GM12878 (cell line): ENCODE measurements at regions of chr6 and their contacts with region 1.

Region 1: DNA sequence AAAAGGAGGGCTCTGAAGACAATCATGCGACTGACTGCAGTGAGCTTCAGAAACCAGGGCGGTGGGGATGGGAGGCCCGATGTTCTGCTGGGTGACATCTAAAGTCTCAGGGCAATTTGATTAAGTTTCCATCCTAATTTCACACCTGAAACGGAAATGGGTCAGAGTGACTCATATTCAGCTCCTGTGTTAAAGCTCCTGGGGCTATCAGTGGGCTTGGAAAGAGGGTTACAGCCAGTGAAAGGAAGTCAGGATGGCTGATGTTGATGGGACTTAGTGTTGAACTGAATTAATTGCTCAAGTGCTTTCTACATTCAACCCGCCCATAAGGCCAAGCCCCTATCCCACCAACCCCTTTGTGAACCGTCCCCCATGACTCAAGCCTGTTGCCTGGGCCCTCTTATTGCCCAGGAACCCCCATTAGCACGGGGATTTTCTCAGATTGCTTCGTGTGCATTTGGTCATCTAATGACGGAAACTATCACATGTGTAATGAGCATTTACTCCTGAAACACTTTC is 47.1 kb upstream of the TBC1D7 start:
- DNase-seq: peak; percentile 95
- ATAC-seq: peak; percentile 88
- H3K4me3 ChIP-seq: no peak overlapping the region
- H3K27ac ChIP-seq: peak overlapping the region; percentile 98
- H3K4me1 ChIP-seq: peaks cover 65% of the 10 kb centered on the region
- H3K27me3 ChIP-seq: no peaks in the 10 kb centered on the region
- CTCF ChIP-seq: no peak
- EP300 ChIP-seq: peak; percentile 72 to 82; a peak in 3 of 4 replicates
- POLR2A ChIP-seq: peak; percentile 38; the same call in 1 of the 2 replicates
- RAD21 ChIP-seq: no peak

Region 2: DNA sequence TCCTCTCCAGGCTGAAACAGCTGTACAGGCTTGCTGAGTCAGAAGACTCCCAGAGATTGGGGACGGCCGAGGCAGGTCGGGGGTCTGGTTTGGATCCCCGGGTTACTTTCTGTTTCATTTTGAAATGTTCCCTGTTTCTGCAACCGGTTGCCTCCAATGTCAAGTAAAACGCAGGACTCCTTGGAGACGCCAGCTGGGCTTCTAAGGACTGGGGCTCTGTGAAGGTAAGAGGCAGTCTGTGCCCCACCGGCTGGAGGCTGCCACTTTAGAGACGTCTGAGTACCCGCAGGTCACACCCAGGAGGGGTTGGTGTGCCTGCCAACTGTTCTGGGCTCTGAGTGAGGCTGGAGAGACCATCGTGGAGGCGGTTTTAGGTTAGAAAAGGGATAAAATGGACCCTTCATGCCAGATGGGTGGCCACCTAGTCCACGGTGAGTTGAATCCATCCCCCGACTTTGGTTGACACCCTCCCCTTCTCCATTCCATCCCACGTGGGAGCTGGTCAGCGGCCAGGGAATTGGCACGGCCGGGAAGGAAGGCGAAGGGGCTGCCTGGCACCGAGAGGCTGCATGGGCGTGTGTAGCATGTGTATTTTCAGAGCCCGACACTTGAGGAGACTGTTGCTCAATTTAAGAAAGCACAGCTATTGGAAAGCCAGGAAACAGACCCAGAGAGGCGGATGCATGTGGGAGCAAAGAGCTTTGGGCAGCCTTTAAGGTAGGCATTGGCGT is 417.9 kb before region 1 on chr6:
- CTCF ChIA-PET with region 1: no interaction called
- POLR2A ChIA-PET with region 1: no interaction called
- RAD21 ChIA-PET with region 1: no interaction called
- SMC1A ChIA-PET with region 1: no interaction called
- in situ Hi-C with region 1: no loop called
- intact Hi-C with region 1: no loop called
- DNase-seq: no peak
- ATAC-seq: peak; percentile 68
- H3K4me3 ChIP-seq: peak overlapping the region; percentile 68
- H3K27ac ChIP-seq: no peak overlapping the region
- H3K4me1 ChIP-seq: no peaks in the 10 kb centered on the region
- H3K27me3 ChIP-seq: peaks cover 2 to 23% of the 10 kb centered on the region in 2 experiments; a peak in 3 of 4 replicates
- CTCF ChIP-seq: peak in 1 of 3 experiments; percentile 8; a peak in 1 of 6 replicates
- EP300 ChIP-seq: no peak
- POLR2A ChIP-seq: no peak
- RAD21 ChIP-seq: 0 out of 2 replicates have a peak, but pooled peaks have one; percentile 13

Region 3: DNA sequence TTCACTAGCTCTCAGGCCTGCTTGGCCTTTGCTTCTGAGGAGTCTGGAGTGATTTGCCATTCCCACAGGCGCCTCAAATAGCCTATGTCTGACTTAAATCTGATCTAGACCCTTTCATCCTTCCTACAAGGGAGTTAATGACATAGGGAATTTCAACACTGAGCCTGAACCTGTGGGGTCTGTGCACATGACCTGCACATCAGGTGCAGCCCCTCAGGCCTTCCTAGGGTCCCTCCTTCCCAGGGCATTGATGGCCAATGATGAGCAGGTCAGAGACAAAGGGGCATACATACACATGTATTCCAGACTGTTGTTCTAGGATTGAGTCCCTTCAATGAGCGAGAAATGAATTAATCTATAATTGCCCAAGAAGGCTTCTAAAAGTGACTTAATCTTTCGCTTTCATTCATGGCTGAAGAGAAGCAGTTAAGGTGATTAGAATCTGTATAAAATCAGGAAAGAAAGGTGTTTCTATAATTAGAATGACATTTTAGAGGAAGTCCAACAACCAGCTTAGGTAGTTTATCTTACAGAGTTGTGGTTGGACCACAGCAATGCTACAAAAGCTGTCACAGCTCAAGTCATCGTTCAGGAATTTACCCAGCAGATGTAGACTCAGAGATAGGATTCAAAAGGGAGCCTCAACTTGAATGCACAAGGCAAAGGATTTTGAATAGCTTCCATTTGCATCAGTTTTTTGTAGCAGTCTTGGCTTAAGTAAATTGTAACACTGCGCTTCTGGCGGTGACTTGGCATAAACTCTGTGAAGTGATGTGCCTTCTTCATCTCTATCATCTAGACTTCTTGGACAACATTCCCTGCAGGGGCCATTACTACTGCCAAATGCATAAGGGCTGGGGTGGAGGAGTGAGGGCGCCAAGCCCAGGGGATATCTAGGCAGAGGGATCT is 20.1 kb before region 1 on chr6:
- CTCF ChIA-PET with region 1: interaction called, 41 read pairs
- POLR2A ChIA-PET with region 1: interaction called, 45 read pairs
- RAD21 ChIA-PET with region 1: interaction called, 67 read pairs
- SMC1A ChIA-PET with region 1: interaction called, 178 read pairs
- in situ Hi-C with region 1: no loop called
- intact Hi-C with region 1: loop called (anchors 1 kb)
- DNase-seq: peak; percentile 66
- ATAC-seq: peak; percentile 79
- H3K4me3 ChIP-seq: peak overlapping the region; percentile 58
- H3K27ac ChIP-seq: peak overlapping the region; percentile 94
- H3K4me1 ChIP-seq: peaks cover 36% of the 10 kb centered on the region
- H3K27me3 ChIP-seq: no peaks in the 10 kb centered on the region
- CTCF ChIP-seq: no peak
- EP300 ChIP-seq: 0 out of 4 replicates have a peak, but pooled peaks of 1 of the 2 experiments have one; percentile 25
- POLR2A ChIP-seq: no peak
- RAD21 ChIP-seq: no peak

Region 4: DNA sequence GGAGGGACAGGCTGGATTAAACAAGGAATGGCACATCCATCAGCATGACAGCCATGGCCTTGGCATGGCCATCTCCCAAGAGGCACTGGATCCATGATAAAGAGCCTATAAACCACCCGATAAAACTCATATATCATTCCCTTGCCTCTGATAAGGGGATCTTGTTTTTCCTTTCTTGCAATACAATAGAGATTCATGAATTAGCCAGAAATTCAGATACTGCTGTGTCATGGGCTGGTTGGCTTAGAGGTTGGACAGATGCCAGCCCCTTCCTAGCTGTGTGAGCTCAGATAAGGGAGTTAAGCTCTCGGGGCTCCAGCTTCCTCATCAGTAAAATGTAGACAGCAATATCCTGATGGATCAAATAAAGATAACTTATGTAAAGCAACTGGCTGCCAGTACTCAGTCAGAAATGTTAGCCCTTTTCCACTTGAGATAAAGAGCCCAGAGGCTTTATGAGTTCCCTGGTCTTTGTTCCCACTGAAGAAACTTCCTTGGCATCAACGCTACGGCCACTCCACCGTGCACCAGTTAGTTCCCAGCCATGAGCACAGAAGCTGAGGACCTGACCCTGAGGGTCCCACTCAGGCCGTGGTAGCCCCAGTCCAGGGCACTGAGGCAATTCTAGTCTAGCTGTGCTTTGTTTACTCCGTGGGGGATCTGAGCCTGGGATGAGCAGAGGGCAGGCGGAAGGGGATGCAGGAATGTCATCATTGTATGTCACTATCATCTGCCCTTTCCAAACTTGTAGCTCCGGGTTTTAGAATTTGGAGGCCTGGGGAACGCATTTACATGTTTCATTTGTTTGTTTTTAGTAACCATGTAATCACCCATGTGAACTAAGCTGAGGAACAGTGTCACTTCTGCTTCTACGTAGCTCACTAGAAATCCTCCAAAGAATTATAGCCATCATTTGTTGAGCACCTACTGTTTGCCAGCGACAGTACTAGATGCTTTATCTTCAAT is 20.1 kb after region 1 on chr6:
- CTCF ChIA-PET with region 1: interaction called, 15 read pairs
- POLR2A ChIA-PET with region 1: interaction called, 11 read pairs
- RAD21 ChIA-PET with region 1: interaction called, 14 read pairs
- SMC1A ChIA-PET with region 1: interaction called, 19 read pairs
- in situ Hi-C with region 1: no loop called
- intact Hi-C with region 1: no loop called
- DNase-seq: no peak
- ATAC-seq: peak; percentile 65
- H3K4me3 ChIP-seq: no peak overlapping the region; the same call in 1 of the 2 replicates
- H3K27ac ChIP-seq: peak overlapping the region; percentile 76
- H3K4me1 ChIP-seq: peaks cover 38% of the 10 kb centered on the region
- H3K27me3 ChIP-seq: no peaks in the 10 kb centered on the region
- CTCF ChIP-seq: no peak
- EP300 ChIP-seq: 0 out of 4 replicates have a peak, but pooled peaks of 1 of the 2 experiments have one; percentile 45
- POLR2A ChIP-seq: no peak
- RAD21 ChIP-seq: no peak

Region 5: DNA sequence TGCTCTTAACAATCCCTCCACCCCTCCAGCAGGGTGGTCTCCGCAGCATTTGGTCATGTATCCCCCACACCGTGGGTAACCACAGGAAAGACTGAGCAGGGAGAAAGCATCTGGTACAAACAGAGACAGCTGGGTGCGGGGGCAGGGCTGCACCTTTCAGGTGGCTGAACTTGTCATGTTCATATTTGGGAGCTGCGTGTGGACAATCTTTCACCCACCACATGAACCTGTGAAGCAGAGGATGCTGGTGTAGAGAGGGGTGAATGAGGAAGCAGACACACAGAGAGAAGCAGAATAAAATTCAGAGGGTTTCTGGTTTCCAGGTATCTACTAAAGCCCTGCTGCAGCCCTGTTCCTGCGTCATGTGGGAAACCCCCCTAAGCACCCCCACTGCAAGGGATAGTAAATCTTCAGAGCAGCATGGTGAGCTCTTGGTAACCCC is 103.1 kb after region 1 on chr6:
- CTCF ChIA-PET with region 1: no interaction called
- POLR2A ChIA-PET with region 1: interaction called, 6 read pairs
- RAD21 ChIA-PET with region 1: interaction called, 18 read pairs
- SMC1A ChIA-PET with region 1: interaction called, 19 read pairs
- in situ Hi-C with region 1: no loop called
- intact Hi-C with region 1: loop called (anchors 5 kb)
- DNase-seq: no peak
- ATAC-seq: peak; percentile 56
- H3K4me3 ChIP-seq: 0 out of 2 replicates have a peak overlapping the region, but pooled peaks have one; percentile 1
- H3K27ac ChIP-seq: peak overlapping the region; percentile 63
- H3K4me1 ChIP-seq: peaks cover 48% of the 10 kb centered on the region
- H3K27me3 ChIP-seq: no peaks in the 10 kb centered on the region
- CTCF ChIP-seq: no peak
- EP300 ChIP-seq: no peak
- POLR2A ChIP-seq: no peak
- RAD21 ChIP-seq: no peak

Region 6: GRCh38 chr6:13538084-13538483 is 162.7 kb after region 1 on chr6:
- CTCF ChIA-PET with region 1: interaction called, 31 read pairs
- POLR2A ChIA-PET with region 1: no interaction called
- RAD21 ChIA-PET with region 1: interaction called, 5 read pairs
- SMC1A ChIA-PET with region 1: interaction called, 14 read pairs
- in situ Hi-C with region 1: no loop called
- intact Hi-C with region 1: no loop called
- DNase-seq: no peak
- ATAC-seq: peak; percentile 80
- H3K4me3 ChIP-seq: no peak overlapping the region
- H3K27ac ChIP-seq: no peak overlapping the region
- H3K4me1 ChIP-seq: no peaks in the 10 kb centered on the region
- H3K27me3 ChIP-seq: no peaks in the 10 kb centered on the region
- CTCF ChIP-seq: peak; percentile 27 to 49 (median 36); a peak in 4 of 6 replicates
- EP300 ChIP-seq: no peak
- POLR2A ChIP-seq: no peak
- RAD21 ChIP-seq: peak; percentile 61